Activated CD4-positive, alpha-beta T cell treated with anti-CD3 and anti-CD28 coated beads for 36 hours (primary cell): ENCODE measurements at regions of chr6 and their contacts with region 1.

Region 1: DNA sequence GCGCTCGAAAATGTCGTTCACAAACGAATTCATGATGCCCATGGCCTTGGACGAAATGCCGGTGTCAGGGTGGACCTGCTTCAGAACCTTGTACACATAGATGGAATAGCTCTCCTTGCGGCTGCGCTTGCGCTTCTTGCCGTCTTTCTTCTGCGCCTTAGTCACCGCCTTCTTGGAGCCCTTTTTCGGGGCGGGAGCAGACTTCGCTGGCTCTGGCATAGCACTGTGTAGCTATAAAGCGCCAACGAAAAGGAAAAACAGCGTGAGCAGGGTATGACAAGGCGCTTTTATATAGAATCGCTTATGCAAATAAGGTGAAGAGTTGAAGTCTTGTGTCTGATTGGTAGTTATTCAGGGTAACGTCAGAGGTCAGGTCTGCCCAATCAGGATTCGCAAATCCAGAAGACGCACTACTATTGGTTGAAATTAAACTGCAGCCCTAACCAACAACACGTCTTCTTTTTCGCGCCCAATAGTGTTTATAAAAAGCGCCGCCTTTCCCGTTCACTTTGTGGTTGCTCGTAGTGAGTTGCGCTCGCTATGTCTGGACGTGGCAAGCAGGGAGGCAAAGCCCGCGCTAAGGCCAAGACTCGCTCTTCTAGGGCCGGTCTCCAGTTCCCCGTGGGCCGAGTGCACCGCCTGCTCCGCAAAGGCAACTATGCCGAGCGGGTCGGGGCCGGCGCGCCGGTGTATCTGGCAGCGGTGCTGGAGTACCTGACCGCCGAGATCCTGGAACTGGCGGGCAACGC is 114.8 kb upstream of the PRSS16 start:
- DNase-seq: peak; percentile 93
- ATAC-seq: peak; percentile 80
- H3K4me3 Mint-ChIP-seq: no peak overlapping the region
- H3K27ac Mint-ChIP-seq: no peak overlapping the region
- H3K4me1 Mint-ChIP-seq: peaks cover 21% of the 10 kb centered on the region
- H3K27me3 Mint-ChIP-seq: no peaks in the 10 kb centered on the region

Region 2: GRCh38 chr6:26031595-26032339 is 1100.9 kb before region 1 on chr6:
- CTCF ChIA-PET with region 1: no interaction called
- POLR2A ChIA-PET with region 1: interaction called, 7 read pairs
- intact Hi-C with region 1: loop called (anchors 1 to 2 kb)
- DNase-seq: peak; percentile 92
- ATAC-seq: peak; percentile 69
- H3K4me3 Mint-ChIP-seq: peak overlapping the region; percentile 81
- H3K27ac Mint-ChIP-seq: peak overlapping the region; percentile 98
- H3K4me1 Mint-ChIP-seq: peaks cover 50% of the 10 kb centered on the region
- H3K27me3 Mint-ChIP-seq: no peaks in the 10 kb centered on the region

Region 3: GRCh38 chr6:26175428-26176181 is 957.1 kb before region 1 on chr6:
- CTCF ChIA-PET with region 1: interaction called, 3 read pairs
- POLR2A ChIA-PET with region 1: interaction called, 4 read pairs
- intact Hi-C with region 1: loop called in 1 of 2 experiments (anchors 5 kb)
- DNase-seq: peak; percentile 69
- ATAC-seq: peak; percentile 14
- H3K4me3 Mint-ChIP-seq: peak overlapping the region; percentile 30
- H3K27ac Mint-ChIP-seq: peak overlapping the region; percentile 80
- H3K4me1 Mint-ChIP-seq: peaks cover 33% of the 10 kb centered on the region
- H3K27me3 Mint-ChIP-seq: no peaks in the 10 kb centered on the region

Region 4: GRCh38 chr6:26285143-26286134 is 847.3 kb before region 1 on chr6:
- CTCF ChIA-PET with region 1: no interaction called
- POLR2A ChIA-PET with region 1: interaction called, 4 read pairs
- intact Hi-C with region 1: loop called (anchors 1 to 5 kb)
- DNase-seq: peak; percentile 98
- ATAC-seq: peak; percentile 80
- H3K4me3 Mint-ChIP-seq: peak overlapping the region; percentile 88
- H3K27ac Mint-ChIP-seq: peak overlapping the region; percentile 99
- H3K4me1 Mint-ChIP-seq: peaks cover 14% of the 10 kb centered on the region
- H3K27me3 Mint-ChIP-seq: peaks cover 3% of the 10 kb centered on the region

Region 5: DNA sequence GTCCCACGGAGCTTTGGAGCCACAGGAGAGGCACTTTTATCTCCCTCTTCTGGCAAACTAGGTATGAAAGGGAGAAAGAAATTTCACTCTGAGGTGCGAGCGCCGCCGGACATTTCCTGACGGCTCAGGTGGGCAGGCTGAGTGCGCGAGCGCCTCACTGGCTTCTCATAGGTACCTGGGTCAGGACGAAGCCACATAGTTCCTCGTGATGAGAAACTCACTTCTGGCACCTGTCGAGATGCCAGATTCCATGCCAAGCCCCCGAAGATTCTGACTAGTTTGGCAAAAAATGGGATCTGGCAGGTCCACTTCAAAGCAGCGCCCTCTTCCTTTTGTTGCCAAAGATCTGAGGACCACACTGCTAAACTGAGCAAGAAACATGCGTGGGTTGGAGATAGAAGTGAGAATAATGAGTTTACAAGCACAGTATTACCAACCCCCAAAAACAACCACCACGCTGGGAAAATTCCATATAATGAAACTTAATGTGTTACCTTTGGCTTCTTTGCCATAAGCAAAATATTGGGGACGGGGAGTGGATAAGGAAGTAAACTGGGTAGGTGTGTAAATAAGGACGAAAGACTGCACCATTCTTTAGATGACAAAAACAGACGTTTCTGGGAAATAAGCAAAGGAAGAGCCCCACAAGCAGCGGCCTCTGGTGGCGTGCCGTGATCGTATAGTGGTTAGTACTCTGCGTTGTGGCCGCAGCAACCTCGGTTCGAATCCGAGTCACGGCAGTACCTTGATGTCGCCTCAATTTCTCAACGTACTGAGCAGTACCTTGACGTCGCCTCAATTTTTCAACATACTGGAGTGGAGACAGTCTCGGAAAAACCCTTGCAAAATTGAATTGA is 25.0 kb after region 1 on chr6:
- CTCF ChIA-PET with region 1: interaction called, 3 read pairs
- POLR2A ChIA-PET with region 1: interaction called, 7 read pairs
- intact Hi-C with region 1: loop called (anchors 1 kb)
- DNase-seq: peak; percentile 91
- ATAC-seq: peak; percentile 84
- H3K4me3 Mint-ChIP-seq: peak overlapping the region; percentile 78
- H3K27ac Mint-ChIP-seq: peak overlapping the region; percentile 92
- H3K4me1 Mint-ChIP-seq: peaks cover 46% of the 10 kb centered on the region
- H3K27me3 Mint-ChIP-seq: no peaks in the 10 kb centered on the region

Region 6: GRCh38 chr6:27452496-27452897 is 319.8 kb after region 1 on chr6:
- CTCF ChIA-PET with region 1: no interaction called
- POLR2A ChIA-PET with region 1: no interaction called
- intact Hi-C with region 1: no loop called
- DNase-seq: no peak
- ATAC-seq: no peak
- H3K4me3 Mint-ChIP-seq: no peak overlapping the region
- H3K27ac Mint-ChIP-seq: no peak overlapping the region
- H3K4me1 Mint-ChIP-seq: no peaks in the 10 kb centered on the region
- H3K27me3 Mint-ChIP-seq: no peaks in the 10 kb centered on the region

Region 7: GRCh38 chr6:27864906-27865849 is 732.5 kb after region 1 on chr6:
- CTCF ChIA-PET with region 1: no interaction called
- POLR2A ChIA-PET with region 1: interaction called, 38 read pairs
- intact Hi-C with region 1: loop called in 1 of 2 experiments (anchors 1 kb)
- DNase-seq: peak; percentile 86
- ATAC-seq: peak; percentile 57
- H3K4me3 Mint-ChIP-seq: peak overlapping the region; percentile 94
- H3K27ac Mint-ChIP-seq: peak overlapping the region; percentile 99
- H3K4me1 Mint-ChIP-seq: peaks cover 40% of the 10 kb centered on the region
- H3K27me3 Mint-ChIP-seq: no peaks in the 10 kb centered on the region